Posterior cingulate gyrus (tissue), 11 donors: ENCODE measurements at regions of chr19 and their contacts with region 1.

Region 1: DNA sequence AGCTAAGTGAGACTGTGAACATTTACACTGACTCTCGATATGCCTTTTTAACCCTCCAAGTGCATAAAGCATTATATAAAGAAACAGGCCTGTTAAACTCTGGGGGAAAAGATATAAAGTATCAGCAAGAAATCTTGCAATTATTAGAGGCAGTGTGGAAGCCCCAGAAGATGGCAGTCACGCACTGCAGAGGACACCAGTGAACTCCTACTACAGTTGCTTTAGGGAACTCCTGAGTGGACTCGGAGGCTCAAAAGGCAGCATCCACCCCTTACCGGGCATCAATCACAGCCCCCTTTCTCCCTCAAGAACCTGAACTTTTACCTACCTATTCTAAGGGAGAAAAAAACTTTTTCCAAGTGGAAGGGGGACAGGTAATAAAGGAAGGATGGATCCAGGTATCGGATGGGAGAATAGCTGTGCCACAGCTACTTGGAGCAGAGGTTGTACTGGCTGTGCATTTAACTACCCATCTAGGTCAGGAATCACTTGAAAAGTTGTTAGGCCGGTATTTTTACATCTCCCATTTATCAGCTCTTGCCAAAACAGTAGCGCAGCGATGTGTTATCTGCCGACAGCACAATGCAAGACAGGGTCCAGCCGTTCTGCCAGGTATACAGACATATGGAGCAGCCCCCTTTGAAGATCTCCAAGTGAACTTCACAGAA is 80.1 kb downstream of the ZNF486 start:
- DNase-seq: peak in 8 of 10 donors; percentile 39 to 93 (median 70)

Region 2: GRCh38 chr19:20359933-20360720 is 113.0 kb after region 1 on chr19:
- intact Hi-C with region 1: loop called (anchors 1 kb)
- DNase-seq: peak in 6 of 10 donors; percentile 23 to 83 (median 50)

Region 3: DNA sequence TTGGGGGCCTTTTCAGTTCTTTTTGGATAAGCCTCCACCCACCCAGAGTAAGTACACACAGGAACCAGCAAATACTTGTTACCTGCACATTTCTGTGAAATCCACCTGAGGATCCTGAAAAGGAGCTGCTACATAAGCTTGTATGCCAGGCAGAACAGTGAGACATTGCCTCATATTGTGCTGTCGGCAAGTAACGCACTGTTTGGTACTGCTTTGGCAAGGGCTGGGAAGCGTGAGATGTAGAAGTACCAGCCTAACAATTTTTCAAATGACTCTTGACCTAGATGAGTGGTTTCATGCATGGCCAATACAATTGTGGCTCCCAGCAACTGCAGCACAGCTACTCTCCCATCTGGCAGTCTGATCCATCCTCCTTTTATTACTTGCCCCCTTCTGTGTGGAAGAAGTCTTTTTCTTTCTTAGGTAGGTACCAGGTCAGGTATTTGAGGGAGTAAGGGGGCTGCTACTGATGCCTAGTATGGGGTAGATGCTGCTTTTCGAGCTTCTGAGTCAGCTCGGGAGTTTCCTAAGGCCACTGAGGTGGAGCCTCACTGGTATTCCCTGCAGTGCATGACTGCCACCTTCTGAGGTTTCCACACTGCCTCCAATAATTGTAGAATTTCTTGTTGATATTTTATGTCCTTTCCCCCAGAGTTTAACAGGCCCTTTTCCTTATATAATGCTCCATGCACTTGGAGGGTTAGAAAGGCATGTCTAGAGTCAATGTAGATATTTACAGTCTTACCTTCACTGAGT is 266.2 kb after region 1 on chr19:
- intact Hi-C with region 1: loop called (anchors 5 kb)
- DNase-seq: no peak